ENCODE measurements at regions of chr12 and their contacts with region 1.

Region 1: GRCh38 chr12:63826006-63826585 is 18.4 kb upstream of the SRGAP1 start:
- DNase-seq: peak; percentile 73
- H3K4me3 ChIP-seq: no peak overlapping the region
- H3K27ac ChIP-seq: no peak overlapping the region
- H3K4me1 ChIP-seq: no peaks in the 10 kb centered on the region
- H3K27me3 ChIP-seq: no peaks in the 10 kb centered on the region
- CTCF ChIP-seq: peak; percentile 93

Region 2: GRCh38 chr12:62158461-62159360 is 1667.4 kb before region 1 on chr12:
- CTCF ChIA-PET with region 1: no interaction called
- POLR2A ChIA-PET with region 1: no interaction called
- intact Hi-C with region 1: no loop called
- DNase-seq: no peak
- H3K4me3 ChIP-seq: no peak overlapping the region
- H3K27ac ChIP-seq: no peak overlapping the region
- H3K4me1 ChIP-seq: no peaks in the 10 kb centered on the region
- H3K27me3 ChIP-seq: no peaks in the 10 kb centered on the region
- CTCF ChIP-seq: no peak

Region 3: GRCh38 chr12:64256166-64256800 is 430.2 kb after region 1 on chr12:
- CTCF ChIA-PET with region 1: interaction called, 5 read pairs
- POLR2A ChIA-PET with region 1: no interaction called
- intact Hi-C with region 1: loop called (anchors 1 kb)
- DNase-seq: peak; percentile 79
- H3K4me3 ChIP-seq: no peak overlapping the region
- H3K27ac ChIP-seq: no peak overlapping the region
- H3K4me1 ChIP-seq: no peaks in the 10 kb centered on the region
- H3K27me3 ChIP-seq: no peaks in the 10 kb centered on the region
- CTCF ChIP-seq: peak; percentile 71

Region 4: GRCh38 chr12:64392221-64392620 is 566.1 kb after region 1 on chr12:
- CTCF ChIA-PET with region 1: no interaction called
- POLR2A ChIA-PET with region 1: no interaction called
- intact Hi-C with region 1: loop called (anchors 2 kb)
- DNase-seq: peak; percentile 57
- H3K4me3 ChIP-seq: no peak overlapping the region
- H3K27ac ChIP-seq: no peak overlapping the region
- H3K4me1 ChIP-seq: no peaks in the 10 kb centered on the region
- H3K27me3 ChIP-seq: no peaks in the 10 kb centered on the region
- CTCF ChIP-seq: peak; percentile 58